GM18951 (cell line): ENCODE measurements at regions of chr3 and their contacts with region 1.

Region 1: GRCh38 chr3:146594843-146595482 is 10.2 kb downstream of the PLSCR5 start:
- POLR2A ChIP-seq: no peak

Region 2: GRCh38 chr3:146634346-146634745 is 39.4 kb after region 1 on chr3:
- in situ Hi-C with region 1: loop called (anchors 5 kb)
- POLR2A ChIP-seq: no peak

Region 3: GRCh38 chr3:146732325-146732724 is 137.4 kb after region 1 on chr3:
- in situ Hi-C with region 1: no loop called
- POLR2A ChIP-seq: no peak

Region 4: DNA sequence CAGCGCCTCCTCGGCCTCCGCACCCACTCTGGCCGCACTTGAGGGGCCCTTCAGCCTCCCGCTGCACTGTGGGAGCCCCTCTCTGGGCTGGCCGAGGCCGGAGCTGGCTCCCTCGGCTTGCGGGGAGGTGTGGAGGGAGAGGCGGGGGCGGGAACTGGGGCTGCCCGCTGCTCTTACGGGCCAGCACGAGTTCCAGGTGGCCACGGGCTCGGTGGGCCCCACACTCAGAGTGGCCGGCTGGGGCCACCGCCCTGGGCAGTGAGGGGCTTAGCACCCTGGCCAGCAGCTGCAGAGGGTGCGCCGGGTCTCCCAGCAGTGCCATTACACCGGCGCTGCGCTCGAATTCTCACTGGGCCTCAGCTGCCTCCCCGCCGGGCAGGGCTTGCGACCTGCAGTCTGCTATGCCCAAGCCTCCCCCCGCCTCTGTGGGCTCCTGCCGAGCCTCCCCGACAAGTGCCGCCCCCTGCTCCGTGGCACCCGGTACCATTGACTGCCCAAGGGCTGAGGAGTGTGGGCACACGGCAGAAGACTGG is 177.3 kb after region 1 on chr3:
- in situ Hi-C with region 1: no loop called
- POLR2A ChIP-seq: no peak